Left cardiac atrium (tissue), 4 donors: ENCODE measurements at regions of chr4 and their contacts with region 1.

Region 1: DNA sequence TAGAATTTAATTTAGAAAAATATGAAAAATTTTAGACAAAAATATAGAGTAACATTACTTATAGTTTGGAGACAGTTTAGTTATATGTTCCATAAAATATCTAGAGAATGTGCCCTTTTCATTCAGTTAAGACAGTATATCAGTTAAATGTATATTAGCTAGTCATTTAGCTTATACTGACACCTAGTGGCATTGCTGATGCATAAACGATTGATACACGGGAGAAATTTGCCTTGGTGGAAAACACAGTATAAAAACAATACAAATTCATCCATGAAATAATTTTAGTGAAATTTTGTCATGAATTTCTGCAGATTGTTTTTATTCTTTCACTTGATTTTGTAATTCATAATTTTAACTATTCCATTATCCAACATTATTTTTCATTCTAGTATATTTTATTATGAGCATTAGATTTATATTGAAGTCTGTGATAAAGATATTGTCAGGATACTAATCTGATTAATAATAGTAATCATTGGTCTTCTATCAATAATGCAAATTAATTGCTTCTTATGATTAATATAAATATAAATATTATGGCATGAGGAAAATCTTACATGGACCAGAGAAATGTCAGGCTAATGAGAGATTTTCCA is 219.0 kb downstream of the TLL1 start:
- DNase-seq: no peak
- ATAC-seq: peak in 1 of 2 donors; percentile 61

Region 2: DNA sequence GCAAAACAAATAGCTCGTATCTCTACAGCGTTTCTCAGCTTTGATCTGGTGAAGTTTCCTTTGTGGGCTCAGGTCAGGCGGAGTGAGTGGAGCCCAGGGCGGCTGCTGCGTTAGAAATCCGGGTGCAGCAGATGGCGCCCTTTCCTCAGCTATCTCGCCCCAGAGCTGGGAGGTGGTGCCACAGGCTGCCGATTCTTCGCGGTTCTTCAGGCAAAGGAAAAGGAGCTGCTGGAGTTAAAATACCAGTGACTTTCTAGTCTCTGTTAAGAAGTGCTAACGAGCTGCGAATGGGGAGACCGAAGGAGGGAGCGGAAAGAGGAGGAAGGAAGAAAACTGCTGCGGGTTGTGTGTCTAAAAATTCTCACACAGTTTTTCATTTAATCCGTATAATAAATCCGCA is 598.7 kb before region 1 on chr4:
- intact Hi-C with region 1: loop called in 1 of 2 experiments (anchors 2 kb)
- DNase-seq: peak; percentile 71
- ATAC-seq: peak; percentile 91 to 99